ENCODE measurements at regions of chr3 and their contacts with region 1.

Region 1: GRCh38 chr3:99023590-99024192 is 122.2 kb upstream of the DCBLD2 start:
- DNase-seq: peak; percentile 74
- H3K4me3 ChIP-seq: no peak overlapping the region
- H3K27ac ChIP-seq: no peak overlapping the region
- H3K4me1 ChIP-seq: no peaks in the 10 kb centered on the region
- H3K27me3 ChIP-seq: no peaks in the 10 kb centered on the region
- CTCF ChIP-seq: peak; percentile 80

Region 2: DNA sequence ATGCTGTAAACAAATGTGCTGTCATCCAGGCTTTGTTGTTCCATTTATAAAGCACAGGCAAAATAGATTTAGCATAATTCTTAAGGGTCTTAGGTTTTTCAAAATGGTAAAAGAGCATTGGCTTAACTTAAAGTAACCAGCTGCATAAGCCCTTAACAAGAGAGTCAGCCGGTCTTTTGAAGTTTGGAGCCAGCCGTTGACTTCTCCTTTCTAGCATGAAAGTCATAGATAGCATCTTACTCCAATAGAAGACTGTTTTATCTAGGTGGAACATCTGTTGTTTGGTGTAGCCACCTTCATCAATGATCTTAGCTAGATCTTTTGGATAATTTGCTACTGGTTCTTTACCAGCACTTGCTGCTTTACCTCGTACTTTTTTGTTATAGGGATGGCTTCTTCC is 175.3 kb after region 1 on chr3:
- CTCF ChIA-PET with region 1: no interaction called
- POLR2A ChIA-PET with region 1: no interaction called
- intact Hi-C with region 1: no loop called
- DNase-seq: no peak
- H3K4me3 ChIP-seq: no peak overlapping the region
- H3K27ac ChIP-seq: no peak overlapping the region
- H3K4me1 ChIP-seq: no peaks in the 10 kb centered on the region
- H3K27me3 ChIP-seq: no peaks in the 10 kb centered on the region
- CTCF ChIP-seq: no peak

Region 3: DNA sequence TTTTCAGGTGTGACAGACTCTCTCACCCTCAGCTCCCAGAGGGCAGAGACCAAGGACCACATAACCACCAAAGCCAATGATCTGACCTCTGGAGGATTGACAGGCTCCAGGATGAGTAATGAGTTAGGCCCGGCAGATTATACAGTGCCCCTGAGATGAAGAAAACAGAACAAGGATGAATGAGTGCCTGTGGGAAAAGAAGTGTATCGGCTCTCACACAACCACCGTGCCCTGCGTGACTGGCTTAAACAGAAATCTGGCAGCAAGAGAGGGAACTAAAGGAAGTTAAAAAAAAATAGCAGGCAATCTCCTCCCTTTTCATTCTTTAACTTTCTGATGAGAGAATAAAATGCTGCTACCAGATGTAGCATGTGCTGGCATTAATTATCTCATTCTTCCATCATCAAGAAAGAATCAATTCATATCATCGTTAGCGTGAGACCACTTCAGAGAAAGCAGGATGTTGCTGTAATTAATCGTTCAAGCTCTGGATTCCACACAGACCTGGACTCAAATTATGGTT is 387.2 kb after region 1 on chr3:
- CTCF ChIA-PET with region 1: no interaction called
- POLR2A ChIA-PET with region 1: no interaction called
- intact Hi-C with region 1: no loop called
- DNase-seq: no peak
- H3K4me3 ChIP-seq: no peak overlapping the region
- H3K27ac ChIP-seq: no peak overlapping the region
- H3K4me1 ChIP-seq: no peaks in the 10 kb centered on the region
- H3K27me3 ChIP-seq: no peaks in the 10 kb centered on the region
- CTCF ChIP-seq: no peak

Region 4: DNA sequence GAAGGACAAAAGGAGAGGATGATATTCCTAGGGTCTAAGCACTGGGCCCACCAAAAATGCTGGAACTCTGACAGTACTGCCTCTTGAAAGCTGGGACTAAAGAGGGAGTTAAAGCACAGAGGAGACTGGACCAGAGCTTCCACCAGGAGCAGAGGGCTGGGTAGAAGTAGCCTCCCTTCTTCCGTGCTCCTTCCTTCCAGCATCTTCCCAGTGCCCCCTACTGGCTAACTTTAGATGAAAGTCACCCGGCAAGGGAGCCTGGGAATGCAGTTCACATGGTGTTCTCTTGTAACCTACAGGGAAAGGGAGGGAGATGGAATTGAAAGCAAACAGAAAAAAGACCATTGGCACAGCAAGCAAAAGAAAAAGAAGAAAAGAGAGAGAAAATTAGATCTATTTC is 508.6 kb after region 1 on chr3:
- CTCF ChIA-PET with region 1: interaction called, 3 read pairs
- POLR2A ChIA-PET with region 1: no interaction called
- intact Hi-C with region 1: loop called (anchors 2 kb)
- DNase-seq: peak; percentile 88
- H3K4me3 ChIP-seq: no peak overlapping the region
- H3K27ac ChIP-seq: no peak overlapping the region
- H3K4me1 ChIP-seq: peaks cover 8% of the 10 kb centered on the region
- H3K27me3 ChIP-seq: no peaks in the 10 kb centered on the region
- CTCF ChIP-seq: peak; percentile 82

Region 5: GRCh38 chr3:99686955-99687612 is 663.4 kb after region 1 on chr3:
- CTCF ChIA-PET with region 1: no interaction called
- POLR2A ChIA-PET with region 1: no interaction called
- intact Hi-C with region 1: loop called (anchors 2 kb)
- DNase-seq: peak; percentile 72
- H3K4me3 ChIP-seq: no peak overlapping the region
- H3K27ac ChIP-seq: no peak overlapping the region
- H3K4me1 ChIP-seq: peaks cover 21% of the 10 kb centered on the region
- H3K27me3 ChIP-seq: no peaks in the 10 kb centered on the region
- CTCF ChIP-seq: peak; percentile 74

Region 6: DNA sequence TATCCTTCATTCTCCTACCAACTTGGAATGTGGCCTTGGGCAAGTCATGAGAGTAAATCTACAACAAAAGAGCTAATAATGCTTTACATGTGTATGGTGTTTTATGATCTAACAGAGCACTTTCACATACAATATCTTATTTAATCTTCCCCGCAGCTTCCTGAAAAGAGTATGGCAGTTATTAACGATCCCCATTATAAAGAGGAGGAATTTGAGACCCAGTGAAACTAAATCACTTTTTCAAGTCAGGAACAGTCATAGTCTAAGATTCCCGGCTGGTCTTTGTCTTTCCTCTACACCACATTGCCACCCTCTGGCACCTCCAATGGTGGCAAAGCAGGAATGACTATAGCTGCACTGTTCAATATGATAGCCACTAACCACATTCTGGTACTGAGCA is 724.2 kb after region 1 on chr3:
- CTCF ChIA-PET with region 1: interaction called, 10 read pairs
- POLR2A ChIA-PET with region 1: no interaction called
- intact Hi-C with region 1: loop called (anchors 2 kb)
- DNase-seq: peak; percentile 83
- H3K4me3 ChIP-seq: no peak overlapping the region
- H3K27ac ChIP-seq: no peak overlapping the region
- H3K4me1 ChIP-seq: peaks cover 5% of the 10 kb centered on the region
- H3K27me3 ChIP-seq: no peaks in the 10 kb centered on the region
- CTCF ChIP-seq: peak; percentile 66

Measured in A673 (cell line).